GM12878 (cell line): ENCODE measurements at regions of chr5 and their contacts with region 1.

Region 1: GRCh38 chr5:123605822-123606221 is 93.8 kb downstream of the CSNK1G3 start:
- DNase-seq: no peak
- ATAC-seq: peak; percentile 74
- H3K4me3 ChIP-seq: no peak overlapping the region
- H3K27ac ChIP-seq: no peak overlapping the region
- H3K4me1 ChIP-seq: peaks cover 8% of the 10 kb centered on the region; the same call in 1 of the 2 replicates
- H3K27me3 ChIP-seq: no peaks in the 10 kb centered on the region
- CTCF ChIP-seq: no peak
- EP300 ChIP-seq: no peak
- POLR2A ChIP-seq: no peak
- RAD21 ChIP-seq: no peak

Region 2: GRCh38 chr5:123582550-123583285 is 23.1 kb before region 1 on chr5:
- CTCF ChIA-PET with region 1: interaction called, 5 read pairs
- POLR2A ChIA-PET with region 1: no interaction called
- RAD21 ChIA-PET with region 1: interaction called, 4 read pairs
- SMC1A ChIA-PET with region 1: interaction called, 13 read pairs
- in situ Hi-C with region 1: no loop called
- intact Hi-C with region 1: no loop called
- DNase-seq: no peak
- ATAC-seq: no peak; the same call in 2 of the 3 replicates
- H3K4me3 ChIP-seq: no peak overlapping the region
- H3K27ac ChIP-seq: no peak overlapping the region
- H3K4me1 ChIP-seq: no peaks in the 10 kb centered on the region
- H3K27me3 ChIP-seq: no peaks in the 10 kb centered on the region
- CTCF ChIP-seq: no peak
- EP300 ChIP-seq: no peak
- POLR2A ChIP-seq: no peak
- RAD21 ChIP-seq: no peak

Region 3: GRCh38 chr5:123594434-123594833 is 11.4 kb before region 1 on chr5:
- CTCF ChIA-PET with region 1: interaction called, 23 read pairs
- POLR2A ChIA-PET with region 1: no interaction called
- RAD21 ChIA-PET with region 1: interaction called, 6 read pairs
- SMC1A ChIA-PET with region 1: interaction called, 13 read pairs
- in situ Hi-C with region 1: no loop called
- intact Hi-C with region 1: no loop called
- DNase-seq: no peak
- ATAC-seq: no peak
- H3K4me3 ChIP-seq: no peak overlapping the region
- H3K27ac ChIP-seq: no peak overlapping the region
- H3K4me1 ChIP-seq: no peaks in the 10 kb centered on the region
- H3K27me3 ChIP-seq: no peaks in the 10 kb centered on the region
- CTCF ChIP-seq: no peak
- EP300 ChIP-seq: no peak
- POLR2A ChIP-seq: no peak
- RAD21 ChIP-seq: no peak

Region 4: GRCh38 chr5:123763201-123763600 is 157.4 kb after region 1 on chr5:
- CTCF ChIA-PET with region 1: no interaction called
- POLR2A ChIA-PET with region 1: no interaction called
- RAD21 ChIA-PET with region 1: no interaction called
- SMC1A ChIA-PET with region 1: no interaction called
- in situ Hi-C with region 1: no loop called
- intact Hi-C with region 1: no loop called
- DNase-seq: no peak
- ATAC-seq: no peak
- H3K4me3 ChIP-seq: no peak overlapping the region
- H3K27ac ChIP-seq: no peak overlapping the region
- H3K4me1 ChIP-seq: no peaks in the 10 kb centered on the region
- H3K27me3 ChIP-seq: no peaks in the 10 kb centered on the region
- CTCF ChIP-seq: no peak
- EP300 ChIP-seq: no peak
- POLR2A ChIP-seq: no peak
- RAD21 ChIP-seq: no peak

Region 5: GRCh38 chr5:124080256-124080655 is 474.4 kb after region 1 on chr5:
- CTCF ChIA-PET with region 1: no interaction called
- POLR2A ChIA-PET with region 1: no interaction called
- RAD21 ChIA-PET with region 1: no interaction called
- SMC1A ChIA-PET with region 1: no interaction called
- in situ Hi-C with region 1: no loop called
- intact Hi-C with region 1: no loop called
- DNase-seq: no peak
- ATAC-seq: no peak
- H3K4me3 ChIP-seq: no peak overlapping the region
- H3K27ac ChIP-seq: no peak overlapping the region
- H3K4me1 ChIP-seq: no peaks in the 10 kb centered on the region
- H3K27me3 ChIP-seq: no peaks in the 10 kb centered on the region
- CTCF ChIP-seq: no peak
- EP300 ChIP-seq: no peak
- POLR2A ChIP-seq: no peak
- RAD21 ChIP-seq: no peak